PC-3 (cell line): ENCODE measurements at regions of chr22 and their contacts with region 1.

Region 1: DNA sequence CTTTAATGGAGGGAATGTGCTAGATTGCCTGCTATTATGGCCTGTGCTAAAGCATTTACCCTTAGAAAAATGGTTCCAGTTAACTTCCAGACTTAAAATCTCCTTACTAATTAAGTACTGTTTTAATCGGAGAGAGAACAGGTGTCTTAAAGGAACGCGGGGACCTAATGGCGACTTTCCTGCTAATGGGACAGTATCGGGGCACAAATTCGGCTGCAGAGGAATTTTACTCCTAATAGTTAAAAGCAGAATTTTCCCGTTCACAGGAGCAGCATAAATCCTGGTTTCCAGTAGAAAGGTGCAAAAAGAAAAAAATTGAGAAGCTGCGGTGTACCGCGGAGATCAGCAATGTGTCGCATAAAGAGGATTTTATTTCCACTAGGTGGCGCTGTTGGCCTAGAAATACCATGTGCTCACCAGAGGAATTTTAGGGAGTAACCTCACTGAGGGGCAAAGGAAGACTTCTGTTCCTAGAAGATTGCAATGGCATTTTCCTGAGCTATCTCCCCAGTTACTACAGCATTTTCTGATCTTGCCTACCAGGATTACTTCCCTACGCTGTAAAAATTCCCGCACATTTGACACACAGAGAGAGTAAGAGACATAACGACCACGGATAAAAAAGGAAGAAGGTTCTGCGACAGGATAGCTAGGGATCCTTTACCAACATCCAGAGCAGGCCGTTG is 44.5 kb downstream of the ZNF280B start:
- DNase-seq: peak; percentile 79
- ATAC-seq: peak; percentile 70
- H3K4me3 ChIP-seq: no peak overlapping the region
- H3K27ac ChIP-seq: no peak overlapping the region
- H3K4me1 ChIP-seq: no peaks in the 10 kb centered on the region
- H3K27me3 ChIP-seq: no peaks in the 10 kb centered on the region
- CTCF ChIP-seq: peak; percentile 74

Region 2: DNA sequence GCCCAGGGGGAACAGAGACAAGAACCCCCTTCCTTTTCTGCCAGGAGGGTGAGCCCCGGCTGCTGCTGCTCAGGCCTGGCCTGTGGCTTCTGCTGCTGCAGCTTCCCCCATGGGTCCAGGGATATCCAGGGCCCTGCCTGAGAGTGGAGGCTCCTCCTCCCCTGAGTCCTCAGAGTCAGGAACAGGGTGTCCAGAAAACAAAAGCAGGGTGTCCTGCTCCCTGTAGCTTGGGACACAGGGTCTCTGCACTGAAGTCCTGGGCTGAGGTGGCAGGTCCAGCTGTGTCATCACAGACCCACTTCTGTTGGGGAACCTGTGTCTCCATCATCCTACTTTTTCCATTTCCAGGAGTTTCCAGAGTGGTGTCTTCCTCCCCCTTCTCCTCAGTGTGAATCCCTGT is 31.5 kb before region 1 on chr22:
- CTCF ChIA-PET with region 1: no interaction called
- POLR2A ChIA-PET with region 1: no interaction called
- intact Hi-C with region 1: no loop called
- DNase-seq: no peak
- ATAC-seq: no peak
- H3K4me3 ChIP-seq: no peak overlapping the region
- H3K27ac ChIP-seq: no peak overlapping the region
- H3K4me1 ChIP-seq: no peaks in the 10 kb centered on the region
- H3K27me3 ChIP-seq: no peaks in the 10 kb centered on the region
- CTCF ChIP-seq: no peak

Region 3: DNA sequence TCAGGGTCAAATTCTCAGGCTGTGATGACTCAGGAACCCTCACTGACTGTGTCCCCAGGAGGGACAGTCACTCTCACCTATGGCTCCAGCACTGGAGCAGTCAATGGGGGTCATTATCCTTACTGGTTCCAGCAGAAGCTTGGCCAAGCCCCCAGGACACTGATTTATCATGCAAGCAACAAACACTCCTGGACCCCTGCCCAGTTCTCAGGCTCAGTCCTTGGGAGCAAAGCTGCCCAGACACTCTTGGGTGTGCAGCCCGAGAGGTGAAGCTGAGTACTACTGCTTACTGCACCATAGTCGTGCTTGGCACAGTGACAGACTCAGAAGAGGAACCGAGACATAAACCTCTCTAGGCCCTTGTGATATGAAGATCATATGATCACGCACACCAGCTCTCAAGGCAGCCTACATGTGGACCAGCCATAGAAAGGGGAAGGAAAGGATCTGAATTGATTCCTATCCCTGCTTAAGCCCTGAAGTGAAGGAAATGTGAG is 13.6 kb before region 1 on chr22:
- CTCF ChIA-PET with region 1: no interaction called
- POLR2A ChIA-PET with region 1: no interaction called
- intact Hi-C with region 1: no loop called
- DNase-seq: no peak
- ATAC-seq: no peak
- H3K4me3 ChIP-seq: no peak overlapping the region
- H3K27ac ChIP-seq: no peak overlapping the region
- H3K4me1 ChIP-seq: no peaks in the 10 kb centered on the region
- H3K27me3 ChIP-seq: peaks cover 13% of the 10 kb centered on the region; the same call in 1 of the 2 replicates
- CTCF ChIP-seq: no peak

Region 4: DNA sequence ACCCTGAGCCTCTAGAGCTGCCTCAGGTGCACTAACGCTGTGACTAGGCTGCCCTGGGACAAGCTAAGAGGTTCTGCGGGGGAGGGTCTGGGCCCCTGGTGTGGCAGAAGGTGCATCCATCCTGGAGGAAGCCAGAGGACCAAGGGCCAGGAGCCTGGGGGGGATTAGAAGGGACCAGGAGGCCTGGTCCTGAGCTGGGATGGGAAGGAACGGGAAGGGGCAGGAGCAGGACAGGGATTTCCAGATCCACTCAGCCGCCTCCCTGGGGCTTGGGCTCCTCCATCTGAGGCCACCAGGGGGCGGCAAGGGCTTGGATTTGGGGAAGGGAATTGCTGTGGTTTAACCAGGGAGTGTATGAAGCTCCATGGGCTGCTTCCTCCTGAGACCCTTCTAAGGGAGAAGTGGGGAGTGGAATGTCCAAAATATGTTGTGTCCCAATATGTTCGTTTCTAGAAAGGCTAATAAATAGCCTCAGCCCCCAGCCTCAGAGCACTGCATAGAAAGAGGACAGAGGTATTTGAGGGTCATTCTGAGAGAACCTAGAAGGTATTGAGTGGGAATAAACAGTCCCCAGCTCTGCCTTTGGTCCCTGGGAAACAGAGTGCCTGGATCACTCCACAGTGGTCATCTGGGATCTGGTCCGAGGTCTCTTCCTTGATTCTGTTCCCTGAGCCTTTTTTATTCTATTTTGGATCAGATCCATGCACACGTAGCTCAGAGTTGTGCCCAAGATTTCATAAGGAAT is 112.4 kb after region 1 on chr22:
- CTCF ChIA-PET with region 1: no interaction called
- POLR2A ChIA-PET with region 1: no interaction called
- intact Hi-C with region 1: loop called (anchors 5 kb)
- DNase-seq: peak; percentile 64
- ATAC-seq: peak; percentile 76
- H3K4me3 ChIP-seq: no peak overlapping the region
- H3K27ac ChIP-seq: no peak overlapping the region
- H3K4me1 ChIP-seq: no peaks in the 10 kb centered on the region
- H3K27me3 ChIP-seq: peaks cover 3% of the 10 kb centered on the region
- CTCF ChIP-seq: peak; percentile 72